ENCODE measurements at regions of chr5 and their contacts with region 1.

Region 1: DNA sequence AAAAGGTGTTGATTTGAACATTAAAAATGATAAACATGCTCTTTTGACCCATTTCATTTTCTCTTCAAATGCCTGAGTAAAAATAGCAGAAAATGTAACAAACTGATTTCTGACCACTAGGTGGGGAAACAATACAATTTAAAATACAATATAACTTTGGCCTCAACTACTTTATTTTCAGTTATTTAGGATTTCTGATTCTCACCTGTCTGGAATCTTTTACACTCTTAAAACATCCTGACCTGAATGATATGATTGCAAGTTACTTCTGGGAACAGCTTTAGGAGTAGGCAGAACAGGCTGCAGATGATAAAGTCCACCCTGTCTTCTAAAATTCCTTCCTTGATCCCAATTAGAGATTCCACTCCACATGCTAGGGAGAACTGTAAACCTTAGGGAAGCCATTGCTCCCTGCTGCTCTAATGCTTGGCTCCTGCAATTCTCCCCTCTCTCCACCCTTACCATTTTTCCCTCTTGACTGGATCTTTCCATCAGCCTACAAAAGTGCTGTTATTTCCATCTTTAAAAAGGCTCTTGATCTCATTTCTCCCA is 70.3 kb downstream of the FYB1 start:
- DNase-seq: peak; percentile 77
- H3K4me3 ChIP-seq: no peak overlapping the region
- H3K27ac ChIP-seq: peak overlapping the region; percentile 88
- H3K4me1 ChIP-seq: peaks cover 10% of the 10 kb centered on the region
- H3K27me3 ChIP-seq: no peaks in the 10 kb centered on the region
- CTCF ChIP-seq: peak; percentile 5 to 22
- POLR2A ChIP-seq: no peak

Region 2: DNA sequence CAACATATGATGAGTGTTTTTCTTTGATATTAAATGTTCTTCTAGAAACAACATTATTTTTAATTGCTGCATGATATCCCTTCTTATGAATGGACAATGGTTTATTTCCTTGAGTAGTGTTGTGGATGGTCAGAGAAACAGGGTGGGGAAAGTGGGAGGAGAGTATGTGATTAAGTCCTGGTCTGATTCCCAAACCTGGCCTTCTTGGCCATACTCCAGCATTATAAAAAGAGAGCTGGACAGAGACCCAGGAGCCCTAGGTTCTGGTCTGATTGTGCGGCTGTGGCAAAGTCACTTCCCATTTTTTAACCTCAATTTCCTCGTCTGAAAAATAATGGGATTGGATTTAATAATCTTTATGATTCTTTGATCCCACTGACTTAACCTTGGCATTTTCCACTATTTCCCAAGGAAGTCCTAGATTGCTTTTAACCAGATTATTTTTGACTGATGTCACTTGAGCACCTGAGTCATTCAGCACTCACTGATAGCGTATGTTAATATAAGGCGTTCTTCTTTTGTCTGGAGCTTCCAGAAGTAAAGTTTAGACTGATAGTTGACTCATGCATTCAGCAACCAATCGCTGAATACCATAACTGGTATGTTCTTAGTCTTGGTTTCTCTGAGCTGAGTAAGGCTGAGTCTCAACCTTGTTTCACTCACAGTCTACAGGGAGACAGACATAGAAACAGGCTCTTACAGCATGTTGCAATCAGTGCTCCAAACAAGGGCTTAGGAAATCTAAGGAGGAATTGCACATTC is 277.1 kb before region 1 on chr5:
- CTCF ChIA-PET with region 1: no interaction called
- POLR2A ChIA-PET with region 1: no interaction called
- dilution Hi-C with region 1: no loop called
- intact Hi-C with region 1: no loop called
- DNase-seq: peak; percentile 87
- H3K4me3 ChIP-seq: no peak overlapping the region
- H3K27ac ChIP-seq: peak overlapping the region; percentile 43
- H3K4me1 ChIP-seq: peaks cover 13% of the 10 kb centered on the region
- H3K27me3 ChIP-seq: peaks cover 0 to 4% of the 10 kb centered on the region in 2 experiments
- CTCF ChIP-seq: no peak
- POLR2A ChIP-seq: no peak

Region 3: GRCh38 chr5:39074016-39074886 is 74.8 kb before region 1 on chr5 and contains the start of gene RICTOR:
- CTCF ChIA-PET with region 1: no interaction called
- POLR2A ChIA-PET with region 1: interaction called, 6 read pairs
- dilution Hi-C with region 1: no loop called
- intact Hi-C with region 1: loop called (anchors 2 kb)
- DNase-seq: peak; percentile 91
- H3K4me3 ChIP-seq: peak within 1 kb of the TSS; percentile 89 to 99 (median 92)
- H3K27ac ChIP-seq: peak within 1 kb of the TSS; percentile 90
- H3K4me1 ChIP-seq: peaks cover 35% of the 10 kb centered on the region
- H3K27me3 ChIP-seq: no peaks in the 10 kb centered on the region
- CTCF ChIP-seq: no peak
- POLR2A ChIP-seq: peak; percentile 83
- total RNA-seq, gene RICTOR: 38.0 and 39.5 TPM in 2 replicates

Region 4: GRCh38 chr5:39117401-39117800 is 31.7 kb before region 1 on chr5:
- CTCF ChIA-PET with region 1: interaction called, 3 read pairs
- POLR2A ChIA-PET with region 1: interaction called, 9 read pairs
- dilution Hi-C with region 1: no loop called
- intact Hi-C with region 1: loop called (anchors 2 kb)
- DNase-seq: peak; percentile 97
- H3K4me3 ChIP-seq: no peak overlapping the region
- H3K27ac ChIP-seq: peak overlapping the region; percentile 64
- H3K4me1 ChIP-seq: peaks cover 54% of the 10 kb centered on the region
- H3K27me3 ChIP-seq: no peaks in the 10 kb centered on the region
- CTCF ChIP-seq: no peak
- POLR2A ChIP-seq: no peak

Region 5: DNA sequence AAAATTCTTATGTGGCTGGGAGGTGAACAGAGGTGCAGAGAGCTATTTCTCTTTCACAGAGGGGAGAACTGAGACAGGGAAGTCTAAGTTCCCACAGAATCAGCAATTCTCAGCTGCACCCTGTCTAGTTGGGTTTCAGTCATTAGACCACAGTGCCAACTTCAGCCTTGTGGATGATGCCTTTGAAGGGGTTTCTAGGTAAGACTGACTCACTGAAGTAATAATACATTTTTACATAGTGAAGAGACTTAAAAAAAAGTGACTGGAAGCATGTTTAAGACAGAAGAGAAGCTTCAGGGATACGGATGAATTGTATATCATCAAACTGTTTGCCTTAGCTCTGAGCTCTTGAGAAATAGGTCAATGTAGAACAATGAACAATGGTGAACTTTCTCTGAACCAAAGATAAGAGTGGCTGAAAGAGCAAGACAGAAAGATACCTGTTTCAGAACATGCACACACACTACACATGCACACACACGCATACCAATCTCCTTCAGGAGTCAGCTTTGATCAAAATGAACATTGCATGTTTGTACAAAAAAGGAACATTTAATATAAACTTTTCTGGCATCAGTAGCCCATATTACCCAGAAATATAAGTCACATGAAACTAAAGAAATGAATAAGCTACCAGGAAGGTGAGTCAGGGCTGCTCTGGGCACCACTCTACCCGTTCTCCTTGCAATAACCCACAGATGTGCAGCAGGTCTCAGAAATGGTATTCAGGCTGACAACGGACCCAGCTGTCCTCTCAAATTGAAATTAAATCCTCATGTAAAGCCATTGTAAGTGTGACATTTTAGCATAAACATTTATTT is 82.9 kb after region 1 on chr5:
- CTCF ChIA-PET with region 1: no interaction called
- POLR2A ChIA-PET with region 1: no interaction called
- dilution Hi-C with region 1: no loop called
- intact Hi-C with region 1: no loop called
- DNase-seq: peak; percentile 84
- H3K4me3 ChIP-seq: no peak overlapping the region
- H3K27ac ChIP-seq: peak overlapping the region; percentile 45
- H3K4me1 ChIP-seq: peaks cover 13% of the 10 kb centered on the region
- H3K27me3 ChIP-seq: no peaks in the 10 kb centered on the region
- CTCF ChIP-seq: no peak
- POLR2A ChIP-seq: no peak

Region 6: DNA sequence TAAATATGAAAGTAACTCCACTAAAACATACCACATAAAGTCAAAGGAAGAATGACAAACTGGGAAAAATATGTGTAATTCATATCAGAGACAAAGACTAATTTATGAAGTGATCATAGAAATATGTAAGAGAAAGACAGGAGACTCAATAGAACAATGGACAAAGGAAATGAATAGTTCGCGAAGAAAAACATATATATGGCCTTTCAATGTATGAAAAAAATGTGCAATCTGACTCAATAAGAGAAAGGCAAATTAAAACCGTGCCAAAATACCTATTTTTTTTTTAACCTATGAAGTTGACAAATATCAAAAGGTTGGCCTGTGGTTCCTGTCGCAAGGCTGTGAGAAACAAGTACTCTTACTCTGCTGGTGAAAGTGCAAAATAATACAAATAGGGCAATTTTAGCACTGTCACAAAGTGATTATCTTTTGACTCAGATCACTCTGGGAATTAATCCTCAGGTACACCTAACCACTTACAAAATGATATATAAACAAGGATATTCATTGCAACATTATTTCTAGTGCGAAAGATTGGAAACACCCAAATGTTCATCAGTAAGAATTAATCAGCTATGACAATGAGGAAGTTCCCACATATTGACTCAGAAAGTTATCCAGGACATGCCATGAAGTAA is 211.5 kb after region 1 on chr5:
- CTCF ChIA-PET with region 1: no interaction called
- POLR2A ChIA-PET with region 1: no interaction called
- dilution Hi-C with region 1: no loop called
- intact Hi-C with region 1: loop called (anchors 5 kb)
- DNase-seq: peak; percentile 89
- H3K4me3 ChIP-seq: peak overlapping the region in 1 of 3 experiments; percentile 18
- H3K27ac ChIP-seq: peak overlapping the region; percentile 99
- H3K4me1 ChIP-seq: peaks cover 44% of the 10 kb centered on the region
- H3K27me3 ChIP-seq: no peaks in the 10 kb centered on the region
- CTCF ChIP-seq: no peak
- POLR2A ChIP-seq: no peak

Region 7: DNA sequence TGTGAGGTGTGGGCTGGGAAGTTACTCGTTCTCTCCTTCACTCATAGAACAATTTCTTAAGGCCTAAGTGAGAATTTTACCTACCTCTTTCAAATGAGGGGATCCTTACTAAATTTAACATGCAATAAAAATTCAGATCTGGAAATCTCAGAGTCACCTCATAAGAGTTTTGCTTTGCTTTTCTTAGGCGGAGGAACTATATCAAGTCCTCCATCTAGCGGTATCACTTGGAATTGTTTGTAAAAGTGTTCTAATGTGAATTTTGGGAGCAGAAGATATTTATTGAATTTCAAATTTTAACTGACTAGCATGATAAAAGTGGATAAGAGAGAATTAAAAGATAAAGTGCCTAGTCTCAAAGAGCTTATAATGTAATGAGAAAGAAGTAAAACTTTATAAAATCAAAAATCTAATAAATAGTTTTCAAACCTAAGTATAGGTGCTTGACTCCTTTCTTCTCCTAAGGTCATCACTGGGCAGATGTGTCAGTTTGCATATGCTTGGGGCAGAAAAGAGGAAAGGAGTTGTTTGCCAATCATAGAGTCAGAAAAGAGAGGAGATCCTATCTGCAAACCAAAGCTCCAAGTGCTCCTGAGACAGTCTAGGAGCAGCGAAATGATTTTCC is 421.5 kb after region 1 on chr5:
- CTCF ChIA-PET with region 1: interaction called, 3 read pairs
- POLR2A ChIA-PET with region 1: no interaction called
- dilution Hi-C with region 1: no loop called
- intact Hi-C with region 1: loop called (anchors 1 kb)
- DNase-seq: peak; percentile 61
- H3K4me3 ChIP-seq: no peak overlapping the region
- H3K27ac ChIP-seq: no peak overlapping the region
- H3K4me1 ChIP-seq: peaks cover 4% of the 10 kb centered on the region
- H3K27me3 ChIP-seq: no peaks in the 10 kb centered on the region
- CTCF ChIP-seq: peak; percentile 35 to 37
- POLR2A ChIP-seq: no peak